H1 (cell line): ENCODE measurements at regions of chr6 and their contacts with region 1.

Region 1: DNA sequence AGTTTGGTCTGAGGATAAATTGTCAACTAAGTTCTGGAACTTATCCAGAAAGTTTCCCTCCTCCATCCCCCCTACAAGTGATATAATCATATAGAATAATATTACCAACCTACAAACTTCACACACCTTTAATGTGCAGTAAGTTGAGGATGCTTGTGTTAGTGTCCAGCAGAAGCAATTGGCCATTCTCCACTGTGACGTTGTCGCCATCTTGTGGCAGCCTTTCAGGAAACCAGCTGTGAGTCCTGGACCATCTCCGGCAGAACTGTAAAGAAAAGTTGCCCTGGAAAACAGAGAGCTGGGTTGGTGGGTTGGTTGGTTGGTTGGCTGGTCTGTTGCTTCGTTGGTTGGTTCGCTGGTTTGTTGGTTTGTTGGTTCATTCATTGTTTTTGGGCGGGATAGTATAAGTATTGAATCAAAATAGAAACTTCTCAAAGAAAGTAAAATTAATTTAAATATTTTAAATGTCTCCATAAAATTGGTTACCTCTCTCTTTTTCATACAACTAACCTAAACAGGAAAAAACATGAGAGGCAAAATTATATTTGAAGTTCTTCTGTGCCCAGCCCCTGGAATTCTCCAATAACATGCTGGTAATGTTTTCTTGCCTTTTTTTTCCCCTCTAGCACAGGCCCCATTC is 127.5 kb downstream of the PKHD1 start:
- DNase-seq: peak; percentile 49 to 85
- H3K4me3 ChIP-seq: no peak overlapping the region
- H3K27ac ChIP-seq: no peak overlapping the region
- H3K4me1 ChIP-seq: no peaks in the 10 kb centered on the region
- H3K27me3 ChIP-seq: no peaks in the 10 kb centered on the region
- CTCF ChIP-seq: peak; percentile 73 to 93 (median 92)
- EP300 ChIP-seq: no peak
- POLR2A ChIP-seq: no peak
- RAD21 ChIP-seq: peak; percentile 98

Region 2: GRCh38 chr6:51844336-51844735 is 115.5 kb before region 1 on chr6:
- CTCF ChIA-PET with region 1: interaction called, 17 read pairs
- POLR2A ChIA-PET with region 1: no interaction called
- DNase-seq: no peak
- H3K4me3 ChIP-seq: no peak overlapping the region
- H3K27ac ChIP-seq: no peak overlapping the region
- H3K4me1 ChIP-seq: peaks cover 1 to 19% (median 11%) of the 10 kb centered on the region in 4 experiments; a peak in 6 of 7 replicates
- H3K27me3 ChIP-seq: no peaks in the 10 kb centered on the region
- CTCF ChIP-seq: peak; percentile 37 to 65 (median 51)
- EP300 ChIP-seq: no peak
- POLR2A ChIP-seq: no peak
- RAD21 ChIP-seq: peak; percentile 80 to 84

Region 3: GRCh38 chr6:51855310-51856082 is 104.4 kb before region 1 on chr6:
- CTCF ChIA-PET with region 1: interaction called, 27 read pairs
- POLR2A ChIA-PET with region 1: no interaction called
- DNase-seq: peak in 1 of 2 experiments; percentile 44
- H3K4me3 ChIP-seq: no peak overlapping the region
- H3K27ac ChIP-seq: no peak overlapping the region
- H3K4me1 ChIP-seq: peaks cover 2 to 4% (median 3%) of the 10 kb centered on the region in 4 experiments; a peak in 2 of 7 replicates
- H3K27me3 ChIP-seq: no peaks in the 10 kb centered on the region
- CTCF ChIP-seq: peak in 2 of 3 experiments; percentile 66 to 77; a peak in 3 of 4 replicates
- EP300 ChIP-seq: no peak
- POLR2A ChIP-seq: no peak
- RAD21 ChIP-seq: peak; percentile 78 to 81

Region 4: DNA sequence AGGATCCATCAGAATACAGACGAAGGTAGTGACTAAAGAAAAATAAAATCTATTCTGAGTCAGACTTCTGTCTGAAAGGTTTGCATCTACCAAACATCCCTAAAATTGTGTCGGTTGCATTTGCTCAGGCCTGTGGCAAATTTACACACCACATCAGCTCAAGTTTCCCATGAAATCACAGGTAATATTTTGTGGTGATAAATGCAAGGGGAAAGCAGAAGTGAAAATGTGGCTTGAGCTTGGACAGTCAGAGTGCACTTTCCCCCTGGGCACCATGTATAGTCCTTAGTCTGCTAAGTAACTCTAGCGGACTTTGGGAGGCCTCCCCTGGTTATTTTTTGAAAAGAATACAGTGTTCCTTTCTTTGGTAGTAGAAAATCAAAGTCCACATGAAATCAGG is 31.5 kb before region 1 on chr6:
- CTCF ChIA-PET with region 1: interaction called, 12 read pairs
- POLR2A ChIA-PET with region 1: no interaction called
- DNase-seq: no peak
- H3K4me3 ChIP-seq: no peak overlapping the region
- H3K27ac ChIP-seq: no peak overlapping the region
- H3K4me1 ChIP-seq: peaks cover 0 to 5% (median 0%) of the 10 kb centered on the region in 4 experiments; a peak in 1 of 7 replicates
- H3K27me3 ChIP-seq: no peaks in the 10 kb centered on the region
- CTCF ChIP-seq: no peak
- EP300 ChIP-seq: no peak
- POLR2A ChIP-seq: no peak
- RAD21 ChIP-seq: no peak

Region 5: DNA sequence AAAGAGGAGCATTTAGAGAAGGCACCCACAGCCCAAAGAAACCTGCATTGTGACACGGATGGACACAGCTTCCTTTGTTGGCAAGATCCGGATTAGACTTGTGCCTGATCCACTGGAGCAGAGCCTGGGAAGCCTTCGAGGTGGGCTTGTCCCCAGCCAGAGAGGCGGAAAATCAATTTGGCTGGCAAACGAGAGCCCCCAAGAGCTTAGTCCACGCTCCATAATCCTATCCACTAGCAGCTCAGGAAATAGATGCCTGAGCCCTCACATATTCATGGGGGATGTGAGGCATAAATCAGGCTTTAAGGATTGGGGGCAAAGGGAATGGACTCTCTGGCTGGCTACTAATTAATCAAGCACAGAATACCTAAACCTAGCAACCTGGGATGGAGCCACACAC is 10.4 kb before region 1 on chr6:
- CTCF ChIA-PET with region 1: interaction called, 18 read pairs
- POLR2A ChIA-PET with region 1: no interaction called
- DNase-seq: no peak
- H3K4me3 ChIP-seq: no peak overlapping the region
- H3K27ac ChIP-seq: no peak overlapping the region
- H3K4me1 ChIP-seq: no peaks in the 10 kb centered on the region
- H3K27me3 ChIP-seq: no peaks in the 10 kb centered on the region
- CTCF ChIP-seq: no peak
- EP300 ChIP-seq: no peak
- POLR2A ChIP-seq: no peak
- RAD21 ChIP-seq: no peak